ENCODE measurements at regions of chr15 and their contacts with region 1.

Region 1: GRCh38 chr15:77024271-77025082 is 29.6 kb downstream of the PSTPIP1 start:
- DNase-seq: peak; percentile 72
- H3K4me3 Mint-ChIP-seq: no peak overlapping the region
- H3K27ac Mint-ChIP-seq: peak overlapping the region; percentile 98
- H3K4me1 Mint-ChIP-seq: peaks cover 49% of the 10 kb centered on the region
- H3K27me3 Mint-ChIP-seq: no peaks in the 10 kb centered on the region

Region 2: GRCh38 chr15:76905013-76905839 is 119.3 kb before region 1 on chr15 and contains the start of gene SCAPER:
- CTCF ChIA-PET with region 1: interaction called, 3 read pairs
- POLR2A ChIA-PET with region 1: no interaction called
- intact Hi-C with region 1: loop called (anchors 5 kb)
- DNase-seq: peak; percentile 95
- H3K4me3 Mint-ChIP-seq: peak within 1 kb of the TSS; percentile 91
- H3K27ac Mint-ChIP-seq: peak within 1 kb of the TSS; percentile 83
- H3K4me1 Mint-ChIP-seq: peaks cover 31% of the 10 kb centered on the region
- H3K27me3 Mint-ChIP-seq: no peaks in the 10 kb centered on the region
- total RNA-seq, gene SCAPER: 21.5 to 22.9 TPM

Region 3: GRCh38 chr15:76987926-76988860 is 36.3 kb before region 1 on chr15:
- CTCF ChIA-PET with region 1: interaction called, 12 read pairs
- POLR2A ChIA-PET with region 1: interaction called, 12 read pairs
- intact Hi-C with region 1: loop called (anchors 1 kb)
- DNase-seq: peak; percentile 92
- H3K4me3 Mint-ChIP-seq: peak overlapping the region; percentile 67
- H3K27ac Mint-ChIP-seq: peak overlapping the region; percentile 100
- H3K4me1 Mint-ChIP-seq: peaks cover 49% of the 10 kb centered on the region
- H3K27me3 Mint-ChIP-seq: no peaks in the 10 kb centered on the region

Region 4: GRCh38 chr15:76994971-76995945 is 29.2 kb before region 1 on chr15 and contains the start of gene PSTPIP1:
- CTCF ChIA-PET with region 1: interaction called, 9 read pairs
- POLR2A ChIA-PET with region 1: interaction called, 21 read pairs
- intact Hi-C with region 1: loop called (anchors 1 kb)
- DNase-seq: peak; percentile 83
- H3K4me3 Mint-ChIP-seq: peak within 1 kb of the TSS; percentile 92
- H3K27ac Mint-ChIP-seq: peak within 1 kb of the TSS; percentile 99
- H3K4me1 Mint-ChIP-seq: peaks cover 60% of the 10 kb centered on the region
- H3K27me3 Mint-ChIP-seq: no peaks in the 10 kb centered on the region
- total RNA-seq, gene PSTPIP1: 155 to 164 TPM

Region 5: GRCh38 chr15:77013776-77014131 is 10.7 kb before region 1 on chr15:
- CTCF ChIA-PET with region 1: interaction called, 7 read pairs
- POLR2A ChIA-PET with region 1: interaction called, 4 read pairs
- intact Hi-C with region 1: loop called (anchors 1 kb)
- DNase-seq: peak; percentile 95
- H3K4me3 Mint-ChIP-seq: peak overlapping the region; percentile 73
- H3K27ac Mint-ChIP-seq: peak overlapping the region; percentile 83
- H3K4me1 Mint-ChIP-seq: peaks cover 87% of the 10 kb centered on the region
- H3K27me3 Mint-ChIP-seq: peaks cover 1% of the 10 kb centered on the region

Region 6: DNA sequence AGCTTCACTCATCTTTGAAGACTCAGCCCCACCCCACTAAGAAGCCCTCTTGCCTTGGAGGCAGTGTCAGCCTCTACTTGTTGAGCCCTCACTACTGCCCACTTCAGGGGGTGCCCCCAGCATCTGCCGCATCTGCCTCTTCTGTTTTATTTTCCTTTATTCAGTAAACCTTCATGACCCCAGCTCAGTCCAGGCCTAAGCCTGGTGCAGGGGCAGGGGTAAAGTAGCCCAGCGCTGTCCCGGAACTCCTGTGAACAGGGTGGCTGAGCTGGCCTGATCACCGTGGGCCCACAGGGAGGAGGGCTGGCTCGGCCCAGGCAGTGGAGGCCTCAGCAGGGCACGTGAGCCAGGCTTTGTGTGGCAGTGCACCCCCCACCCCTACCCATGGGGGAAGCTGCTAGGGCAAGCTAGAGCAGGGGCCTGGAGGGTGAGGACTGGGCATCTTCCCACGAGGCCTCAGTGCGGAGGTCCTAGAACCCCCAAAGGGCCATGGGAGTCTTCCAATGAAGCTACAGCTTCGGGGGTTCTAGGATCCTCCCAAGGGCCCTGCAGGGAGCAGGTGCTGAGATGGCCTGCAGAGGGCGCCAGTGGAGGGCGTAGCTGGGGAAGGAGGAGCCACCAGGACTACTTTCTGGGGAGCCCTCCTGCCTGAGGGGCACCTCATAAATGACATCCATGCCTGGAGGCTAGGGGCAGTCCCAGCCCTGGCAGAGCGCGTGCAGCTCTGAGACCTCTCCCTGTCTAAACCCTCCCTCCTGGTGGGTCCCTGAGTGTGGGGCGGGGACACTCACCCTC is 10.4 kb after region 1 on chr15:
- CTCF ChIA-PET with region 1: interaction called, 60 read pairs
- POLR2A ChIA-PET with region 1: interaction called, 3 read pairs
- intact Hi-C with region 1: no loop called
- DNase-seq: peak; percentile 54
- H3K4me3 Mint-ChIP-seq: no peak overlapping the region
- H3K27ac Mint-ChIP-seq: peak overlapping the region; percentile 56
- H3K4me1 Mint-ChIP-seq: no peaks in the 10 kb centered on the region
- H3K27me3 Mint-ChIP-seq: no peaks in the 10 kb centered on the region

Region 7: GRCh38 chr15:77568973-77569728 is 544.7 kb after region 1 on chr15:
- CTCF ChIA-PET with region 1: no interaction called
- POLR2A ChIA-PET with region 1: no interaction called
- intact Hi-C with region 1: no loop called
- DNase-seq: no peak
- H3K4me3 Mint-ChIP-seq: no peak overlapping the region
- H3K27ac Mint-ChIP-seq: no peak overlapping the region
- H3K4me1 Mint-ChIP-seq: no peaks in the 10 kb centered on the region
- H3K27me3 Mint-ChIP-seq: peaks cover 3% of the 10 kb centered on the region

Measured in activated CD4-positive, alpha-beta memory T cell treated with anti-CD3 and anti-CD28 coated beads for 36 hours (primary cell).